Heart right ventricle (tissue), 16 donors: ENCODE measurements at regions of chr17 and their contacts with region 1.

Region 1: DNA sequence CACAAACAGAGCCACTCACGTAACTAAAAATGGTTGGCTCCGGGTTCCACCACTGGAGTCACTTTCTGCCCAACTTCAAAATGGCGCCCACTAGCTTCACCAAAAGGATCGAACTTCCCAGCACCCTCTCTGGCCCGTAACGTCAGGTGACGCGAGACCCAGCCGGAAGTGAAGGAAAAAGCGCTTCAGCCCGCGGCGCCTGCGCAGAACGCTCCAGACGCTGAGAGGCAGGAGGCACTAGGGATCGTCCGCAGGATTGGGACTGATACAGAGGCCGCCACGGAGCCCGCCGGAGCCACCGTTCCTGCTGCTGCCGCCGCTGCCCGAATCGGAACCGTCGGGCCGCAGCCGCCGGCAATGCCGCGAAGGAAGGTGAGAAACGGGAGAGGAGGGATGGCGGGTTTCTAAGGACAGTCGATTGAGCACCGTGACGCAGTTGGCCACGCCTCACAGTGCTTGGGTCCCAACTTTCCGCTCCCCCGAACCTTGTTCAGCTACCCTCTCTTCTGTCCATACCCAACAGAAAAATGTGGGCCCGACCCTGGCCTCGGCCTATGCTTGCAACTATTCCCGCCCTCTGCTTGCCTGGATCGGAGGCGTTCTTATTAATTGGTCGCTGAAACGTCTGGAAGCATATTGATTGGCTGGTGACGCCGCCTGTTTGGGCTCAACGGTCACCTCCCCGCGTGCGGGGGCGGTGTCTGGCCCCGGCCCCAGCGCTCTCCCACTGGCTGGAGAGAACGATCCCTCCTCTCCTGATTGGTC is at the start of gene KAT7:
- DNase-seq: peak; percentile 99
- ATAC-seq: peak; percentile 95 to 97 (median 96)
- H3K4me3 ChIP-seq: peak within 1 kb of the TSS; percentile 77 to 100 (median 94)
- H3K27ac ChIP-seq: peak within 1 kb of the TSS; percentile 88 to 100 (median 98)
- H3K4me1 ChIP-seq: peaks cover 6 to 67% (median 57%) of the 10 kb centered on the region in 9 donors
- H3K27me3 ChIP-seq: no peaks in the 10 kb centered on the region
- CTCF ChIP-seq: peak in 1 of 9 donors; percentile 41
- total RNA-seq, gene KAT7: 48.9 to 81.3 (median 66.3) TPM

Region 2: GRCh38 chr17:49545806-49546545 is 242.7 kb before region 1 on chr17:
- intact Hi-C with region 1: no loop called
- DNase-seq: no peak
- ATAC-seq: no peak
- H3K4me3 ChIP-seq: no peak overlapping the region
- H3K27ac ChIP-seq: peak overlapping the region in 1 of 10 donors; percentile 26
- H3K4me1 ChIP-seq: peaks cover 0 to 23% (median 0%) of the 10 kb centered on the region in 9 donors
- H3K27me3 ChIP-seq: peaks cover 0 to 18% (median 0%) of the 10 kb centered on the region in 7 donors
- CTCF ChIP-seq: no peak

Region 3: DNA sequence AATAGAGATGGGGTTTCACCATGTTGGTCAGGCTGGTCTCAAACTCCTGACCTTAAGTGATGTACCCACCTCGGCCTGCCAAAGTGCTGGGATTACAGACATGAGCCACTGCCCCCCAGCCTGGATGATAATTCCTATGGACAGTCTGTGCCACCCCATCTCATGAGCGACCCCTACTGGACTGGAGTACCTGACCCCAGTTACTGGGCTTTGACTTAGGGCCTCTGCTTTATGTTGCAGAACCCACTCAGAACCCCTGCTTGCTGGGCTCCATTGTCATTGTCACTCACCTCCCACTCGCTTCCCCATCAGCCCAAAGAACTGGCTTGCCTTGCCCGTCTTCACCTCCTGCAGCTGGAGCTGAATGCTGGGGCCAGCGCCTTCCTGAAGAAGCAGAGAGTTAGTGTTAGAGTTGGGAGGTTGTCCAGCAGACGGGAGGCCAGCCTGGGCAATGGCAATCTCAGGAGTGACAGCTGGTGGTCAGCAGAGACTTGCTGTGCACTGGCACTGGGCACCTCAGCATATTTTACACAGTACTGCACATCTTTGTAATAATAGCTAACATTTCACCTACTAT is 55.2 kb after region 1 on chr17:
- intact Hi-C with region 1: loop called in 4 of 10 experiments (anchors 5 to 10 kb)
- DNase-seq: no peak
- ATAC-seq: no peak
- H3K4me3 ChIP-seq: no peak overlapping the region
- H3K27ac ChIP-seq: peak overlapping the region in 3 of 10 donors; percentile 85 to 91 (median 89)
- H3K4me1 ChIP-seq: peaks cover 8 to 44% (median 35%) of the 10 kb centered on the region in 9 donors
- H3K27me3 ChIP-seq: no peaks in the 10 kb centered on the region
- CTCF ChIP-seq: peak in 5 of 9 donors; percentile 14 to 34 (median 29)

Region 4: GRCh38 chr17:49851387-49852291 is 63.0 kb after region 1 on chr17:
- intact Hi-C with region 1: loop called in 6 of 10 experiments (anchors 2 to 10 kb)
- DNase-seq: peak; percentile 84
- ATAC-seq: peak; percentile 76 to 91 (median 86)
- H3K4me3 ChIP-seq: peak overlapping the region; percentile 38 to 76 (median 62)
- H3K27ac ChIP-seq: peak overlapping the region in 9 of 10 donors; percentile 8 to 75 (median 62)
- H3K4me1 ChIP-seq: peaks cover 3 to 25% (median 19%) of the 10 kb centered on the region in 9 donors
- H3K27me3 ChIP-seq: peaks cover 0 to 6% (median 0%) of the 10 kb centered on the region in 7 donors
- CTCF ChIP-seq: peak; percentile 43 to 86 (median 83)